ENCODE measurements at regions of chr7 and their contacts with region 1.

Region 1: GRCh38 chr7:143214789-143215679 is 6.8 kb upstream of the TAS2R40 start:
- DNase-seq: peak; percentile 74
- CTCF ChIP-seq: peak; percentile 100

Region 2: DNA sequence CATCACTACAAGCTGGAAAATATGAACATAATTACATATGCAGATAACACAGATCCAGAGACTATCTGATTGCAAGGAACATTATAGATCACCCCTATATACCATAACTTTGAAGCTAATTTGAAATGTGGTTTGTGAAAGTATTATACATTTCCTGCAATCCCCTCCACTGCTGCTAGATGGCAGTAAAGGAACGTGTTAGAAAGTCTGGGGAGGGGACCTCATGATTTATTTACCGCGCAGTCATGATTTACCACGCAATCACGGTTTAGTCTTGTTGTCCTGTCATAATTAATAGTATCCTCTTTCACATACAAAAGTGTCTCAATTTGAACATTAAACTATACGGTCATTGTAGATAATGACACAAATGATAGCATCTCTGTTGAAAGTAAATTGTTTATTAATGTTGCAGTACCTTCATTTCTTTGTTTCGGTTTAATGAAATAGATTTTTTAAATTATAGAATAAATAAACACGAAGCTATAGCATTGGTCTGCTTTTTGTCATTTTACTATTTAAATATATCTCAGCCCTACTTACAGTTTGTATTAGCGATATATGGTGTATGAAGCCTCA is 611.1 kb before region 1 on chr7:
- CTCF ChIA-PET with region 1: interaction called, 22 read pairs
- POLR2A ChIA-PET with region 1: no interaction called
- DNase-seq: peak; percentile 62
- CTCF ChIP-seq: peak; percentile 81

Region 3: DNA sequence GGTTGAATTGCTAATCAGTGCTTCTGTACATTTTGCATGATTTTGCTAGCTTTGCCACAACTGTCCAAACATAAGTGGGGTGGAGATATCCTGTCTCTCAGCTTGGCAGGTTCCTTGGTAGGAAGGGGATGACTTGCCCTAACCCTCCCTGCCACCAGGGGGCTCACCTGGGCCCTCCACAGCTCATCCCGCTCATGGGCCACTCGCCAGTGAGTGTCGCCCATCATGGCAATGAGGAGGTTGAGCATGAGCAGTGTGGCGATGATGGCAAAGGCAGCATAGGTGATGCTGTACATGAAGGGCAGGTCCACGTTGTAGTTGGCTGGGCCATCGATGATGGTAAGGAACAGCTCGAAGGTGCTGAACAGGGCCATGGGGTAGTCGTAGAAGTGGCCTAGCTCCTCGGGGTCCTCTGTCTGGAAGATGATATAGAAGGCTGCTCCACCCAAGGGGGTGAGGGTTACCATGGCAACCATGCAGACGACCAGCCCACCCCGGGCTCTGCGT is 341.7 kb before region 1 on chr7:
- CTCF ChIA-PET with region 1: interaction called, 23 read pairs
- POLR2A ChIA-PET with region 1: no interaction called
- DNase-seq: peak; percentile 59
- CTCF ChIP-seq: peak; percentile 46

Region 4: DNA sequence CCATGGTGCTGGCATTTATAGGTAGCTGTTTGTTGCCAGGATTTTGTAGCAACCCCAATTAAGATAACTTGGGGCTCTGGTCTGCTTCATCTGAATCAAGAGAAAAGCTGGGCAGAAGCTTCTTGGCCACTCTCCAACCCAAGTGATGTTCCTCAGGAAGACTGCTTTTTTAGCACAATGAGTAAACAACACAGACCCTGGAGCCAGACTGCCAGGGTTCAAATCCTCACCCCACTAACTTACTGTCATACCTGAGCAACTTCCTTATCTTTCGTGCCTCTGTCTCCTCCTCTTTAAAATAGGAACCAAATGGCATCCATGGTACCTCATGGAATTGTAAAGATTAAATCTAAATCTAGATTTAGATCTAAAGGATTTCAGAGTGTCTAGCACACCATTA is 263.8 kb before region 1 on chr7:
- CTCF ChIA-PET with region 1: interaction called, 10 read pairs
- POLR2A ChIA-PET with region 1: no interaction called
- DNase-seq: no peak
- CTCF ChIP-seq: no peak

Region 5: GRCh38 chr7:143008007-143008901 is 206.8 kb before region 1 on chr7:
- CTCF ChIA-PET with region 1: interaction called, 495 read pairs
- POLR2A ChIA-PET with region 1: no interaction called
- DNase-seq: peak; percentile 69
- CTCF ChIP-seq: peak; percentile 96

Region 6: GRCh38 chr7:143042159-143042789 is 172.8 kb before region 1 on chr7:
- CTCF ChIA-PET with region 1: interaction called, 19 read pairs
- POLR2A ChIA-PET with region 1: no interaction called
- DNase-seq: no peak
- CTCF ChIP-seq: no peak

Region 7: DNA sequence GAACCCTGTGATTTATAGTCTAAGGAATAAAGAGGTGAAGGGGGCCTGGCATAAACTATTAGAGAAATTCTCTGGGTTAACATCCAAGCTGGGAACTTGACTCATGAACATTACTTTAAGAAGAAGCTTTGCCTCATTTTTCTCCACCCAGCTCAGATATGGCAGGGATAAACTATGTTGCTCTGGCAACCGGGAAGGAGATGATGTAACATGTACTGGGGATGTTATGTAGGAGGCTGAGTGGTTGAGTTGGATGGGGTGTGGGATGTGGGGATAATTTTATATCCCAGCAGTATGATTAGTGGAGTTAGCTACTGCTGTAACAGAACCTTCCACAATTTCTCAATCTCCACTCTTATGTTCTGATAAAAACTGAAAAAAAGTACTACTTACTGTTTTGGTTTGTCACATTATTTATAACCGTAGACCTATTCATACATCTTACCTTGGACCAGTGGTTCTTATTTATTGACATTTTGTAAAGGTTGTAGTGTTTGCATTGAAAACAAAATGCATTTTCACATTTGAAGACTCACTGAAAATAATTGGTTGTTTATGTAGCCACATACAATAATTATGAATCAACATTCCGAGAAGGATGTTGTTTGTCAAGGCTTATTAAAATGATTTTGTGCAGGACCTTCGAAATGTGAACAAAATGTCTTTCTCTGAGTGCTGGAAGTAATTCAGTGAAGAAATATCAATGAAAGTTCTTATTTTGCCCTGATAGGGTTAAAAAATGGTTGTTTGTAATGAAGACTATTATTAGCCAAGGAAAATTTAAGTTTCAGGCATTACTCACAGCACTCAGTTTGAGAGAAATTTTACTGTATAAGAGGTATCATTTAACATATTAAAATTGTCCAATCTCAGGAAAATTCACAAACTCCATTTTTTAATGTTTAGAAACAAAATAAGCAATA is 721.3 kb after region 1 on chr7:
- CTCF ChIA-PET with region 1: no interaction called
- POLR2A ChIA-PET with region 1: no interaction called
- DNase-seq: no peak
- CTCF ChIP-seq: no peak